Activated CD4-positive, alpha-beta T cell treated with anti-CD3 and anti-CD28 coated beads for 36 hours (primary cell): ENCODE measurements at regions of chr2 and their contacts with region 1.

Region 1: GRCh38 chr2:196277002-196277401 is 105.6 kb upstream of the STK17B start:
- DNase-seq: peak; percentile 50
- ATAC-seq: peak; percentile 20
- H3K4me3 Mint-ChIP-seq: no peak overlapping the region
- H3K27ac Mint-ChIP-seq: peak overlapping the region; percentile 11
- H3K4me1 Mint-ChIP-seq: peaks cover 61% of the 10 kb centered on the region
- H3K27me3 Mint-ChIP-seq: no peaks in the 10 kb centered on the region

Region 2: DNA sequence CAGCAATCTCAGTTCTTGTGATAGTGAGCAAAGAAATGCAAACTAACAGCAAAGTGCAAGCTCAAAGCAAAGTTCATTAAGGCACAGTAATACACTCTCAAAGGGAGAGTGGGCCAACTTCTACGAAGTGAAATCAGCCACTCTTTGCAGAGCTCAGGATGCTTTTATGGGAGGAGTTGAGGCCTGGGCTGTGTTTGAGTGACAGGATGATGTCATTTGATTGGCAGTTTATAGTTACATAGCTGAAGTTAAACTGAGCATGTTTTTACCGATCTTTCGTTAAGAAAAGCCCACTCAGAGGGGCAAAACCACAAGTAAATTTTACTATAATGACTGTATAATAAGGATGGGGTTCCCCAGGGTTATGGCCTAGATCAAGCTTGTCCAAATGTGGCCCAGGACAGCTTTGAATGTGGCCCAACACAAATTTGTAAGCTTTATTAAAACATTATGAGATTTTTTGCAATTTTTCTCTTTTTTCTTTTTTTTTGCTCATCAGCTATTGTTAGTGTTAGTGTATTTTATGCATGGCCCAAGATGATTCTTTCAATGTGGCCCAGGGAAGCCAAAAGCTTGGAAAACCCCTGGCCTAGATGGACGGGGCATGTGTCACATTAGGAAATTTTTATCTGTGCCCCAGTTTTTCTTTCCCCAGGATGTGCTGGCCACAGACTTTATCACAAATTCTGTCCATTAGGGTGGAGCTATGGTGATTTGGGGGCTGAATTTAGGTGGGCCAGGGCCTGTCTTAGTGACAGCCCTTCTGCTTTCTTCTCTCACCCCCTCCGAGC is 200.0 kb before region 1 on chr2:
- CTCF ChIA-PET with region 1: interaction called, 25 read pairs
- POLR2A ChIA-PET with region 1: interaction called, 3 read pairs
- intact Hi-C with region 1: loop called (anchors 1 to 2 kb)
- DNase-seq: no peak
- ATAC-seq: no peak
- H3K4me3 Mint-ChIP-seq: no peak overlapping the region
- H3K27ac Mint-ChIP-seq: no peak overlapping the region
- H3K4me1 Mint-ChIP-seq: peaks cover 14% of the 10 kb centered on the region
- H3K27me3 Mint-ChIP-seq: no peaks in the 10 kb centered on the region

Region 3: DNA sequence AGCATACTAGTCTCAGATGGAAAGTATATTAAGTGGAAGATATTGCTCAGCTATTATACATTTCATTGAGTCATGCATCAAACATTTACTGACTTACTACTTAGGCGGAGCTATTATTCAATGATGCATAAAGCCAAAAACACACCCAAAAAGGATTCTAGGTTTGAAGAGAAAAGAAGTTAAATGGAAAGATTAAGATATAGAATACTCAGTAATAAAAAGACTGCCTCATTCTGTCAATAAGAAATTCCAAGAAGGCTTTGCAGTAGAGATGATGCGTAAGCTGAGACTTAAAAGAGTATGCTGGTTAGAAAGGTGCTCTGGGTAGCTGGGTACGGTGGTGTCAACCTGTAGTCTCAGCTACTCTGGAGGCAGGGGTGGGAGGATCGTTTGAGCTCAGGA is 133.3 kb before region 1 on chr2:
- CTCF ChIA-PET with region 1: interaction called, 10 read pairs
- POLR2A ChIA-PET with region 1: interaction called, 3 read pairs
- intact Hi-C with region 1: loop called in 1 of 2 experiments (anchors 2 kb)
- DNase-seq: no peak
- ATAC-seq: peak; percentile 62
- H3K4me3 Mint-ChIP-seq: peak overlapping the region; percentile 39
- H3K27ac Mint-ChIP-seq: peak overlapping the region; percentile 87
- H3K4me1 Mint-ChIP-seq: peaks cover 68% of the 10 kb centered on the region
- H3K27me3 Mint-ChIP-seq: no peaks in the 10 kb centered on the region

Region 4: GRCh38 chr2:196182439-196183171 is 94.4 kb before region 1 on chr2:
- CTCF ChIA-PET with region 1: interaction called, 12 read pairs
- POLR2A ChIA-PET with region 1: interaction called, 5 read pairs
- intact Hi-C with region 1: no loop called
- DNase-seq: no peak
- ATAC-seq: peak; percentile 63
- H3K4me3 Mint-ChIP-seq: peak overlapping the region; percentile 53
- H3K27ac Mint-ChIP-seq: peak overlapping the region; percentile 95
- H3K4me1 Mint-ChIP-seq: peaks cover 74% of the 10 kb centered on the region
- H3K27me3 Mint-ChIP-seq: no peaks in the 10 kb centered on the region

Region 5: DNA sequence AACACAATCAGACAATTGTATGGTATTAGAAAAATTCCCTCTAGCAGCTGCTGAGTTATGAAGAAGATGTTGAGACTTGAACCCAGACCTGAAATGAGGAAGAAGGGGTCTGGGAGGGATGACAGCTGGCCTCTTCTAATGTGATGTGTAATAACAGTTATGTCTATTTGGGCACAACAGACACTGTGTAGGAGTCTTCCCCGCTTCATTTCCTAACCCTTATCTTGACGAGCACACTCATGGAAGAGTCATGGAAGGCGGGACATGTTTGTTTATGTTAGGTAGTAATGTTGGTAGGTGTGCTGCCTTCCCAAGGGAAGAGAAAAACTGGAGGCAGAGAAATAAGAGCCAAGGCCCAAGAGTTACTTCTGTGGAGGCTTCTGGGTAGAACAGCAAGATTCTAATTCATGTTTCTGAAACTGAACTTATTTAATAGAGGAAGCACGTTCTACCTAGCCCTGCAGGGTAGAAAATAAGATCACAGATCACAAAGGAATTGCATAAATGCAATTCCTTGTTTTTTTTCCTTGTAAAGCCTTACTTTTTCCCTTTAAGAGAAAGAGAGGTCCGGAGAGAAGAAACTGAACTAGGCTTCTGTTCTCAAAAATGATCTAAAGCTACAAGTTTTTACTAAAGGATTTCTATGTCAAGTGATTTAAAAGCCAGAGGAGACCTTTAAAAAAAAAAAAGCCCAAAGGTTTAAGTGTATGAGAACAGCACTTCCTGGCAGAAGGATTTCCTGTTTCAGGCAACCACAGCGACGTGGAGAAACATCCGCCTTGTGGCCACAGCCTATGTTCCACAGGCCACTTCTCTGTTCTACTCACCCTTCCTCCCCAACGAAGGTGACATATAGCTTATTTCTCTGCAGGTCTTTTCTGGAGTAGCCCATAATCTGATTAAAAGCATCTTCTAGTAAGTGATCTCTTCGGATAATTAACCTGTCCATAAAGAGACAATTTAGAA is 37.1 kb before region 1 on chr2:
- CTCF ChIA-PET with region 1: interaction called, 6 read pairs
- POLR2A ChIA-PET with region 1: no interaction called
- intact Hi-C with region 1: loop called (anchors 1 kb)
- DNase-seq: peak; percentile 91
- ATAC-seq: peak; percentile 58
- H3K4me3 Mint-ChIP-seq: peak overlapping the region; percentile 46
- H3K27ac Mint-ChIP-seq: peak overlapping the region; percentile 97
- H3K4me1 Mint-ChIP-seq: peaks cover 91% of the 10 kb centered on the region
- H3K27me3 Mint-ChIP-seq: no peaks in the 10 kb centered on the region

Region 6: GRCh38 chr2:196441527-196441926 is 164.5 kb after region 1 on chr2:
- CTCF ChIA-PET with region 1: no interaction called
- POLR2A ChIA-PET with region 1: no interaction called
- intact Hi-C with region 1: no loop called
- DNase-seq: no peak
- ATAC-seq: no peak
- H3K4me3 Mint-ChIP-seq: no peak overlapping the region
- H3K27ac Mint-ChIP-seq: no peak overlapping the region
- H3K4me1 Mint-ChIP-seq: no peaks in the 10 kb centered on the region
- H3K27me3 Mint-ChIP-seq: peaks cover 2% of the 10 kb centered on the region

Region 7: DNA sequence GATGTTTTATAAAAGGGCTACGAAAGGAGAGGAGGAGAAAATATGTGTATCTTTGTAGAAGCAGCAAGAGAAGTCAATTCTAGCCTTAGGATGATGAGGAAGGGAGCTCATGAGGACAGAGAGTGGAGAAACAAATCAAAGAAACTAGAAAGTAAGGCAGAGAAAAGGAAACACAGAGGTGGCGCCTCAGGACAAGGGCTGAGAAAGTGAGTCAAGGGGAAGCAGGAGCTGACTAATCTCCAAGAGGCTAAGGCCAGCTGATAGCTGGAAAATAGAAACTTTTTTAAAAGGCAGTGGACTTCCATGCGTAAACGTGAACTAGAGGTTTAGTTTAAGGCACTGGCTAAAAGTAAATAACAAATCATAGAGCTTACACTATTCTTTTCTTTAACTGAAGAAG is 860.2 kb after region 1 on chr2:
- CTCF ChIA-PET with region 1: no interaction called
- POLR2A ChIA-PET with region 1: no interaction called
- intact Hi-C with region 1: no loop called
- DNase-seq: peak; percentile 46
- ATAC-seq: peak; percentile 62
- H3K4me3 Mint-ChIP-seq: no peak overlapping the region
- H3K27ac Mint-ChIP-seq: peak overlapping the region; percentile 76
- H3K4me1 Mint-ChIP-seq: peaks cover 87% of the 10 kb centered on the region
- H3K27me3 Mint-ChIP-seq: no peaks in the 10 kb centered on the region

Region 8: GRCh38 chr2:197499594-197500526 is 1222.9 kb after region 1 on chr2 and contains the starts of genes HSPD1 and HSPE1:
- CTCF ChIA-PET with region 1: no interaction called
- POLR2A ChIA-PET with region 1: no interaction called
- intact Hi-C with region 1: loop called in 1 of 2 experiments (anchors 10 kb)
- DNase-seq: peak; percentile 99
- ATAC-seq: peak; percentile 88
- H3K4me3 Mint-ChIP-seq: peak within 1 kb of the TSS; percentile 92
- H3K27ac Mint-ChIP-seq: peak within 1 kb of the TSS; percentile 97
- H3K4me1 Mint-ChIP-seq: peaks cover 57% of the 10 kb centered on the region
- H3K27me3 Mint-ChIP-seq: no peaks in the 10 kb centered on the region
- total RNA-seq, gene HSPD1: 872 to 1,138 TPM
- total RNA-seq, gene HSPE1: 250 to 356 TPM